Heart left ventricle (tissue), 16 donors: ENCODE measurements at regions of chr3 and their contacts with region 1.

Region 1: DNA sequence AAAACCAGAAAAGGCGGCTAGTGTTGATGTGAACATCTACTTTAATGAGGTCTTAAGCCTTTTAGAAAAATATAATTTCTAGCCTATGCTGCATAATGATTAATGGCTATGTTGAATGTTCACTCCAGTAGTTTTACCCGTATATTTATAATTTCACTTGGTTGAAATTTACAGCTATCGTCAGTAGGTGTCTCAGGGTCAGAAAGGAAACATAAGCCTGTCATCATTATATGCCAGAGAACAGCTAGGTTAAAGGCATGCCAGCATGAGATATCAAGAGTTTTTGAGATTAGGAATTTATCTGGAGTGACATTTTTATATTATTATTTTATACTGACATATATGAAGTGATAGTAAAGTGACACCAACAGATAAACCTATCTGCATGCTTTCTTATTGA is 904.1 kb downstream of the OTOL1 start:
- DNase-seq: no peak
- ATAC-seq: no peak
- H3K4me3 ChIP-seq: no peak overlapping the region
- H3K27ac ChIP-seq: no peak overlapping the region
- H3K4me1 ChIP-seq: no peaks in the 10 kb centered on the region
- H3K27me3 ChIP-seq: no peaks in the 10 kb centered on the region
- CTCF ChIP-seq: no peak
- POLR2A ChIP-seq: no peak

Region 2: DNA sequence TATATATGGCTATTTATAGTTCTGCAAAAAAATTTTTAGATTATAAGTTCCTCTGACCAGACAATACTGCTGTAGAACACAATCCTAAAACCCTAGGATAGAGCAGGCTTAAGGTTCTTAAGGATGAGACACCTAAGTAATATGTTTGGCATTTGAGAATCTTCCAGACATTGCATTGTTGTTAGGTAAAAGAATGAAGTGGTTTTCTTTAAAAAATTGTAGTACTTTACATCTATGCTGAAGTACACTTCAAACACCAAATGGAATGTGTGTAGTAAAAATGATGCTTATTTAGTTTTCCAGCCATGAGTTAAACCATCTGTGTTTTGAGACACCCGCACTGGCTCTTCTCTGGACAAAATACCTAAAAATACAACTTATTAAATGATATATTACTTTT is 46.3 kb before region 1 on chr3:
- intact Hi-C with region 1: no loop called
- DNase-seq: no peak
- ATAC-seq: no peak
- H3K4me3 ChIP-seq: no peak overlapping the region
- H3K27ac ChIP-seq: no peak overlapping the region
- H3K4me1 ChIP-seq: no peaks in the 10 kb centered on the region
- H3K27me3 ChIP-seq: no peaks in the 10 kb centered on the region
- CTCF ChIP-seq: no peak
- POLR2A ChIP-seq: no peak

Region 3: DNA sequence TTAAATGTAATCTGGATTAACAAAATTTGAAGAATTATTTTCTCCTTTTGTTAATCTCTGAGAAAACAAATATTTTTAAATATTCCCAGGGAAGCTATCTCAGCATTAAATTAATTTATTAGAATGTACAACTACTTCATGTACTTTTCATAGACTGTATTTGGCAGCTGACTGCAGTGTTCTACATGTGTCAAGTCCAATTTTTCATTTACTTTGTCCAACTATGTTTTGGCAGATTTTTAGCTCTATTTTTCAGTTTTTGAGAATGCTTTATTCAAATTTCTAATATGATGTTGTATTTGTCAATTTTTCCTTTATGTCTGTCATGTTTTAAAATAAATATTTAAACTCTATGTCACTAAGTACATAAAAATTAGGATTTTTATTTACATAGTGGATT is 21.0 kb after region 1 on chr3:
- intact Hi-C with region 1: loop called in 1 of 10 experiments (anchors 2 kb)
- DNase-seq: no peak
- ATAC-seq: no peak
- H3K4me3 ChIP-seq: no peak overlapping the region
- H3K27ac ChIP-seq: no peak overlapping the region
- H3K4me1 ChIP-seq: no peaks in the 10 kb centered on the region
- H3K27me3 ChIP-seq: no peaks in the 10 kb centered on the region
- CTCF ChIP-seq: no peak
- POLR2A ChIP-seq: no peak

Region 4: DNA sequence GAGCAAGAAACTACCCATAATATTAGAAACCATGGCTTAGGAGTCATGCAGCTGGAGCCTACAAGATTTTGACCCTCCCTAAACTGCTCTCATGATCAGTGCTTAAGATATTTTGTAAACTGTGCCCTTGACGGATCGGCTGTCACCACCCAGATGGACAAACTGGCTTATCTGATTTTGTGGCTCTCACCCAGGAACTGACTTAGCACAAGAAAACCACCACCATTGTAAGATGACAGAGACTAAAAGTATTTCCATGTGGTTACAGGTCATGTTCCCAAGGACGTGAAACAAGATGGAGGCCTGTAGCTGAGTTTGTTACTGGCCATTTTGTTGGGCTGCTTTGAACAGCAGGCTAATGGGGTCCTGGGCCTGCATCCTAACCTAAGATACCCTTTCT is 36.8 kb after region 1 on chr3:
- intact Hi-C with region 1: no loop called
- DNase-seq: no peak
- ATAC-seq: no peak
- H3K4me3 ChIP-seq: no peak overlapping the region
- H3K27ac ChIP-seq: no peak overlapping the region
- H3K4me1 ChIP-seq: no peaks in the 10 kb centered on the region
- H3K27me3 ChIP-seq: no peaks in the 10 kb centered on the region
- CTCF ChIP-seq: no peak
- POLR2A ChIP-seq: no peak

Region 5: DNA sequence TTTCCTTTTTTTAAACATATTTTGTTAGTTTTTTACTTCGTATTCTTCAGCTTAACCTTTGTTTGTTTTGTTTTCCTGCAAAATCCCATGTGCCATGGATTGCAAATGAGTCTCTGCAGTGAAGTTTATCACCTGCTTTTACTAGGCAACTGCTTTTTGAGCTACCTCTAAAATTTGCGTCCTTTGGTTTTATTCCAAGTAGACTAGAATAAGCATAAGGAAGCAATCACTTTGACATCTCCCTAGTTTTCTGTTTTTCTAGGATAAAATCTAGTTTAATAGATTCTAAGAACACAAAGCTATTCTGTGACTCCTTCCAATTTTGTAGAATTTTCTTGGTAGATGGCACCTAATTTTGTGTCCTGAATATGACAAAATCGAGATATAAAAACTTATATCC is 155.1 kb after region 1 on chr3:
- intact Hi-C with region 1: no loop called
- DNase-seq: no peak
- ATAC-seq: no peak
- H3K4me3 ChIP-seq: no peak overlapping the region
- H3K27ac ChIP-seq: no peak overlapping the region
- H3K4me1 ChIP-seq: no peaks in the 10 kb centered on the region
- H3K27me3 ChIP-seq: no peaks in the 10 kb centered on the region
- CTCF ChIP-seq: no peak
- POLR2A ChIP-seq: no peak